A673 (cell line): ENCODE measurements at regions of chr6 and their contacts with region 1.

Region 1: DNA sequence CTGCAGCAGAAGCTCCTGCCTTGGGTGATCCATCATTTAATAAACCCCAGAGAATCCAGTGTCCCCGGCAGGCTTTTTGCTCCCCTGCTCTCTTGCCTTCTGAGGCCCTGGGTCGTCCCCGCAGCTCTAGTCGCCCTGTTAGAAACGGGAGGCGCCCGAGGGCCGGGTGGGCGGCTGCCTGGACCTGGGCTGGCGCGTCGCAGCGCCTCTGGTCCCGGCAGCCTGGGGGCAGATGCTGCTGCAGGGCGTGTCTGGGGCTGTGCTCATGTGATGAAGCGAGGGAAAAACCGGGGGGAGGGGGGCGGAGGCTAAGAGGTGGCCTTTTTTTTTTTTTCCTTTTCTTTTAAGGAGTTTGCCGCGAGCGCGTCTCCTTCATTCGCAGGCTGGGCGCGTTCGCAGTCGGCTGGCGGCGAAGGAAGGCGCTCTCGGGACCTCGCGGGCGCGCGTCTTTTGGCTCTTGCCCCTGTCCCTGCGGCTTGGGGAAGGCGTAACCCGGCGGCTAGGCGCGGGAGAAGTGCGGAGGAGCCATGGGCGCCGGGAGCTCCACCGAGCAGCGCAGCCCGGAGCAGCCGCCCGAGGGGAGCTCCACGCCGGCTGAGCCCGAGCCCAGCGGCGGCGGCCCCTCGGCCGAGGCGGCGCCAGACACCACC is 394 bp downstream of the AKAP12 start:
- DNase-seq: peak; percentile 88
- H3K4me3 ChIP-seq: peak overlapping the region; percentile 84
- H3K27ac ChIP-seq: no peak overlapping the region
- H3K4me1 ChIP-seq: peaks cover 15% of the 10 kb centered on the region
- H3K27me3 ChIP-seq: no peaks in the 10 kb centered on the region
- CTCF ChIP-seq: peak; percentile 26; the same call in 1 of the 2 replicates

Region 2: DNA sequence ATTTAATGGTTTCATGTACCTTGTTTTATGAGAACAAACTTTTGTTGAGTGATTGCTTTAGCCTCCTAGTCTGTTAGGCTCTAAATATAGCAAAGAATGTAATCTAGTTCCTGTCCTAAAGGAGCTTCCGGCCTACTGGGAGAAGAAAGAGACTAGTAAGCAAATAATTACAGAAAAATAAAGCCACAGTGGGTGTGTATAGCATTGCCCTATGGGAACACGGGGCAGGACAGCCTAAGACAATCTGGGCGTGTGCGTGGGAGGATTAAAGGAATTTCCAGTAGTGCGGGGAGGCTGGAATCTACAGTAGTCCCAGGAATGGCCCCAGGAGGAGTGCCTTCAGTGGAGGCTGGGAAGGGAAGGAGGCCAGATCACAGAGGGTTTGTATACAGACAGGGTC is 98.5 kb before region 1 on chr6:
- CTCF ChIA-PET with region 1: no interaction called
- POLR2A ChIA-PET with region 1: no interaction called
- intact Hi-C with region 1: no loop called
- DNase-seq: peak; percentile 77
- H3K4me3 ChIP-seq: no peak overlapping the region
- H3K27ac ChIP-seq: peak overlapping the region; percentile 51
- H3K4me1 ChIP-seq: peaks cover 5% of the 10 kb centered on the region
- H3K27me3 ChIP-seq: no peaks in the 10 kb centered on the region
- CTCF ChIP-seq: no peak

Region 3: DNA sequence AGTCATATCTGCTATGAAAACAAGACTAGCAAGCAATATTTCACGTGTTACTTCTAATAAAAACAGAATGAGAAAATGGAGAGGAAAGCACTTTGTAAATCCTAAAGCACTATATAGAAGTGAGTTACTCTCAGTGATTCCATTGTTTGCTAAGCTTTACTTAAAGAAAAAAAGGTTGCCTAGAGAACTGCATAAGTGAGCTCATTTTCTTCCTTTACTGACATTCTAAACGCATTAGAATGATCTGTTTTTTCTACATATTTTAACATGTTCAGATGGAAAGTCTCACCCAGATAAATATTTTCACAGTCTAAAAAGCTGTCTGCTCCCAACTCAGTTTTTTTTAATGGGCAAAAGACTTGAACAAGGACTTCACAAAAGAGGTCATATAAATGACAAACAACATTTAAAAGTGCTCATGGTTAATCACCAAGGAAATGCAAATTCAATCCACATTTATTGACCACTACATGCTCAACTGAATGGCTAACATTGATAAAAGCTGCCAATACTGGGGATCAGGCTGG is 53.3 kb before region 1 on chr6:
- CTCF ChIA-PET with region 1: no interaction called
- POLR2A ChIA-PET with region 1: interaction called, 10 read pairs
- intact Hi-C with region 1: no loop called
- DNase-seq: no peak
- H3K4me3 ChIP-seq: no peak overlapping the region
- H3K27ac ChIP-seq: no peak overlapping the region
- H3K4me1 ChIP-seq: no peaks in the 10 kb centered on the region
- H3K27me3 ChIP-seq: no peaks in the 10 kb centered on the region
- CTCF ChIP-seq: no peak

Region 4: GRCh38 chr6:151425561-151425960 is 185.4 kb after region 1 on chr6:
- CTCF ChIA-PET with region 1: no interaction called
- POLR2A ChIA-PET with region 1: interaction called, 16 read pairs
- intact Hi-C with region 1: no loop called
- DNase-seq: no peak
- H3K4me3 ChIP-seq: no peak overlapping the region
- H3K27ac ChIP-seq: no peak overlapping the region
- H3K4me1 ChIP-seq: peaks cover 4% of the 10 kb centered on the region
- H3K27me3 ChIP-seq: no peaks in the 10 kb centered on the region
- CTCF ChIP-seq: no peak